Dendritic cell treated with granulocyte-macrophage colony-stimulating factor and Interleukin-4, amounts not matched to agents 40 ng/mL and 50 ng/mL, for 4 days (primary cell): ENCODE measurements at regions of chr6 and their contacts with region 1.

Region 1: DNA sequence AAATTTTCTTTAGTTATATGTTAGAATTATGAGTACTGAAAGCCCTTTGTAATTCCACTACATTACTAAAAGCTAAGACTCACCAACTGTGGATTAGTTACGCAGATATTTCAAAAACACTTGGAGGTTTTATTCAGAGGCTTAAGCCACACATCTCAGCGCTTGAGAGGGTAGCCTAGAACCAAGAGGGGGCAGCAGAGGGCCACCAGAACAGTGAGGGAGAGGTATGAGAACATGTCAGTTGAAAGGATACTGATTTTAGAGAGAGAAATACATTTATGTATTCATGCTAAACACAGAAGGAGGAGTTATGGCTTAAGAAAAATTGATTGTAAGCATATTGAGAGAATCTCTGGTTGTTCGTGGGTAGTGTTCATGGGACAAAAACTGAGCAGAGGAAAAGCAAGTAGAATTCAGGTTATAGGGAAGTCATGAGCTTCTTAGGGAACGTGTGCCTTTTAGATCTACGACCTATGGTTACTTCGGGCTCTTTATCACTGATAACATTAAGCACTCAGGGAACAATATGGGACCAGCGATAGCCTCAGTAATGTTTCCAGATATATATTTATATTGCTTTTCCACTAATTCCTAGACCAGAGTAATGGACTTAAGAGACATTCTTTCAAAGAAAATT is 20.4 kb upstream of the SERINC1 start:
- H3K4me3 Mint-ChIP-seq: no peak overlapping the region
- H3K27ac Mint-ChIP-seq: no peak overlapping the region
- H3K4me1 Mint-ChIP-seq: peaks cover 5% of the 10 kb centered on the region
- H3K27me3 Mint-ChIP-seq: peaks cover 8% of the 10 kb centered on the region

Region 2: GRCh38 chr6:122520179-122520578 is 28.1 kb after region 1 on chr6:
- intact Hi-C with region 1: no loop called
- H3K4me3 Mint-ChIP-seq: no peak overlapping the region
- H3K27ac Mint-ChIP-seq: no peak overlapping the region
- H3K4me1 Mint-ChIP-seq: no peaks in the 10 kb centered on the region
- H3K27me3 Mint-ChIP-seq: no peaks in the 10 kb centered on the region

Region 3: DNA sequence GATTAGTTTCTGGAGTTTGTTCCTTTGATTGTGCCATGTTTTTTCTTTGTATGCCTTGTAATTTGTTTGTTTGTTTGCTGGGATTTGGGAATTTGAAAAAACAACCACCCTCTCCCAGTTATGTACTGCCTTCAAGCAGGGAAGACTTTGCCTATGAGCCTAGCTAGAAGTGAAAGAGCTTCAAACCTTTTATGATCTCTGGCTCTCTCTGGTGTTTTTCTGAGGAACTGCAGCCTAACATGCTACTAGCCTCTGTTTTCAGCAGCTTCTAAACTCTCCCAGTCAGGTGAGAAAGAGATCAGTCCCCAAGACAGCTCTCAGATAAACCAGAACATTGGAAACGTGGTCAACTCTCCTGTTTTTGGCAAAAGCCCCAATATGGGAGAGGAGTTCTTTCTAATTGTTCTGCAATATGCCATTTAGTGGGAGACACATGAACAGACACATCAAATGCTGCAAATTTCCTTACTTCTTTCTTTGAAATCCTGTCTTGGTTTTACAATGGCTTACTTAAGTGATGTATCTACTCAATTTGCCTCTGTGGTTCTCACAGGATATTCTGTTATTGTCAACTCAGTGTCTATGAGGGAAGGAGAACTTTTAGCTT is 38.5 kb after region 1 on chr6:
- intact Hi-C with region 1: loop called (anchors 5 kb)
- H3K4me3 Mint-ChIP-seq: no peak overlapping the region
- H3K27ac Mint-ChIP-seq: no peak overlapping the region
- H3K4me1 Mint-ChIP-seq: no peaks in the 10 kb centered on the region
- H3K27me3 Mint-ChIP-seq: peaks cover 1% of the 10 kb centered on the region

Region 4: GRCh38 chr6:122730775-122731386 is 238.8 kb after region 1 on chr6:
- intact Hi-C with region 1: loop called (anchors 5 kb)
- H3K4me3 Mint-ChIP-seq: no peak overlapping the region
- H3K27ac Mint-ChIP-seq: no peak overlapping the region
- H3K4me1 Mint-ChIP-seq: no peaks in the 10 kb centered on the region
- H3K27me3 Mint-ChIP-seq: peaks cover 15% of the 10 kb centered on the region

Region 5: DNA sequence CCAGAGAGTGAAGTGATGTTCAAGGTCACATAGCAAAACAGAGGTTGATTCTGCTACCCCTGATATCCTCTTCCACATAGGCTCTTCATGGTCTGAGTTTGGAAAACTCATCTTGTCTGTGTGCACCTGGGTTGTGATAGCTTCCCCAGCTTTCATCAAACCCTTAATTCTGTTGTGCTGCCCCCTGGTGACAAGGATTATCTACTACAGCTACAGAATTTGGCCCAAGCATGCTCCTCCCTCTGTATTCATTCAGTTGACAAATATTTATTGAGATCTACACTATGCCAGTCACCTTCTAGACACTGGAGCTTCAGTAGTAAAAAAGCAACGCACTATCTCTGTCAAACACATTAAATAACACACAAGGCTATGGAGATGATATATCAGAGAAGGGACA is 347.4 kb after region 1 on chr6:
- intact Hi-C with region 1: loop called (anchors 1 kb)
- H3K4me3 Mint-ChIP-seq: no peak overlapping the region
- H3K27ac Mint-ChIP-seq: no peak overlapping the region
- H3K4me1 Mint-ChIP-seq: no peaks in the 10 kb centered on the region
- H3K27me3 Mint-ChIP-seq: peaks cover 9% of the 10 kb centered on the region

Region 6: DNA sequence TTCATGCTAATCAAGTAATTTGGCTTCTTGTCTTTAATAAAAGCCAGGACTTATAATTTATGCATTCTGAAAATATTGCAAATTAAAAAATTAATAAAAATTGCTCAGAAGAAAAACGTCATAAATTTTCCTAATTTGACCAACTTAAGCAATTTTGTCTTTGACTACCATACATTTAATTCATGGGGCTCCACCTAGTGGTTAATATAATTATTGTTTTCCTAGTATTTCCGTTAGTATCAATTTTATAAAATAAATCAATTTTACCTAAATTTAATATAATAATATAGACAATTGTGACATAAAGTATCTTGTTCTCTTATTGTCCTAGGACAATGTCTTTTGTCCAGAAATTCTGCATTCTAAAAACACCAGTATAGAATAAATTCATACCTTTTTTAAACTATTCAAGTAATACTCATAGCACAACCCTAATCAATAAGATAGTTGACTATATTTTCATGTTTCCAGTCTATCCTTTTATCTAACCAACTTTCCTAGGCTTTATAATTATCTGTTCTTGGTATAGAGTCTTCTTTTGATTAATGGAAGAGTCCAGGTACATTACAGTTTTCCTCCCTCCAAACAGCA is 824.8 kb after region 1 on chr6:
- intact Hi-C with region 1: loop called (anchors 10 kb)
- H3K4me3 Mint-ChIP-seq: no peak overlapping the region
- H3K27ac Mint-ChIP-seq: no peak overlapping the region
- H3K4me1 Mint-ChIP-seq: no peaks in the 10 kb centered on the region
- H3K27me3 Mint-ChIP-seq: no peaks in the 10 kb centered on the region